Activated T-helper 2 cell treated with anti-CD3 and anti-CD28 coated beads, Interferon-gamma antibody, Interleukin-2, Interleukin-4, amounts not matched to agents 10 μg/mL and 5 μg/mL and 100 μg/mL, durations not matched to agents 14 hours and 24 hours and 36 hours (primary cell): ENCODE measurements at regions of chr5 and their contacts with region 1.

Region 1: GRCh38 chr5:55608595-55609349 is 74.0 kb upstream of the PLPP1 start:
- DNase-seq: no peak
- H3K4me3 Mint-ChIP-seq: no peak overlapping the region
- H3K27ac Mint-ChIP-seq: peak overlapping the region; percentile 80
- H3K4me1 Mint-ChIP-seq: peaks cover 26% of the 10 kb centered on the region
- H3K27me3 Mint-ChIP-seq: no peaks in the 10 kb centered on the region

Region 2: GRCh38 chr5:55577353-55578060 is 31.3 kb before region 1 on chr5:
- intact Hi-C with region 1: loop called (anchors 2 kb)
- DNase-seq: no peak
- H3K4me3 Mint-ChIP-seq: no peak overlapping the region
- H3K27ac Mint-ChIP-seq: peak overlapping the region; percentile 65
- H3K4me1 Mint-ChIP-seq: peaks cover 48% of the 10 kb centered on the region
- H3K27me3 Mint-ChIP-seq: no peaks in the 10 kb centered on the region

Region 3: GRCh38 chr5:55593115-55593472 is 15.7 kb before region 1 on chr5:
- intact Hi-C with region 1: loop called (anchors 2 kb)
- DNase-seq: no peak
- H3K4me3 Mint-ChIP-seq: no peak overlapping the region
- H3K27ac Mint-ChIP-seq: peak overlapping the region; percentile 56
- H3K4me1 Mint-ChIP-seq: peaks cover 57% of the 10 kb centered on the region
- H3K27me3 Mint-ChIP-seq: no peaks in the 10 kb centered on the region